Head of caudate nucleus (tissue), 42 donors: ENCODE measurements at regions of chr1 and their contacts with region 1.

Region 1: GRCh38 chr1:2194898-2195673 is 514 bp upstream of the FAAP20 start:
- DNase-seq: peak; percentile 59 to 92 (median 85)

Region 2: DNA sequence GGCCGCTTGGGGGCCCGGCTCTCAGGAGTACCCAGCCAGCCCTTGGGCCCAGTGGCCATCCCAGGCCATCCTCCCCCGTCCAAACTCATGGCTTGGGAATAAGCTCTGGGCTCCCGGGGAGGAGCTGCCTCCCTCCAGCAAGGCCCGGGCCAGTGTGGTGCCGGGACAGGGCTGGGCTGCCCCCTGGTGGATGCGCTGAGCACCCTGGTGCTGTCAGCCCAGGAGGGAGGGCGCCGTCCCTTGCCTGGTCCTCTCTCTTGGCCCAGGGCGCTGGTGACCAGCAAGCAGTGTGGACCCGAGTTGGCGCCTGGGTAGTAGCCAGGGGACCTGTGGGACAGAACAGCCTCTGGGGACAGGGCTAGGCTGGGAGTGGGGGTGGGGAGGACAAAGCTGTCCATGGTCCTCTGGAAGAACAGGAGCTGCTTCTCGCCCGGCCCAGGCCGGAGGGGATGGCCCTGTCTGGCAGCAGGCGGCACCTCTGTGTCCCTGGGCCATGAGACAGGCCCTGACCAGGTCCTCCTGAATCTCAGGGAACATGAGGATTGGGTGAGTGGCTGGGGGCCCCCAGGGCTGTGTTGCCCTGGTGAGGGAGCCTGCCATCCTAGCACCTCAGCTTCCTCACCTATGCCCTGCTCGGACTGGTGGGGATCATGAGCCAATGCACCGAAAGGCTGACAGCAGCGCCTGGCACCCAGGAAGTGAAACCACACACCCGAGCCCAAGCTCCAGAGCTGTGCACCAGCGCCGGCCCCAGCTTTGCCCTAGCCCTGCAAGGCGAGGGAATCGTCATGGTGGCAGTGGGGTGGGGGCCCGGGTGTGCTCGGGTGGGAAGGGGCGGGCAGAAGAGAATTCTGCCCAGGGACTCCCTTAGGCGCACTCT is 186.9 kb after region 1 on chr1:
- intact Hi-C with region 1: loop called (anchors 2 kb)
- DNase-seq: peak; percentile 62 to 91 (median 81)